ENCODE measurements at regions of chr15 and their contacts with region 1.

Region 1: GRCh38 chr15:38563723-38564519 is 693 bp downstream of the RASGRP1 start:
- DNase-seq: peak; percentile 74 to 81 (median 77)
- ATAC-seq: peak; percentile 92 to 95 (median 92)
- H3K4me3 ChIP-seq: peak overlapping the region; percentile 48 to 60 (median 54)
- H3K27ac ChIP-seq: peak overlapping the region in 2 of 3 donors; percentile 10 to 40
- H3K4me1 ChIP-seq: peaks cover 0 to 13% (median 0%) of the 10 kb centered on the region in 4 donors
- H3K27me3 ChIP-seq: no peaks in the 10 kb centered on the region
- CTCF ChIP-seq: peak; percentile 68 to 92 (median 90)
- POLR2A ChIP-seq: no peak

Region 2: DNA sequence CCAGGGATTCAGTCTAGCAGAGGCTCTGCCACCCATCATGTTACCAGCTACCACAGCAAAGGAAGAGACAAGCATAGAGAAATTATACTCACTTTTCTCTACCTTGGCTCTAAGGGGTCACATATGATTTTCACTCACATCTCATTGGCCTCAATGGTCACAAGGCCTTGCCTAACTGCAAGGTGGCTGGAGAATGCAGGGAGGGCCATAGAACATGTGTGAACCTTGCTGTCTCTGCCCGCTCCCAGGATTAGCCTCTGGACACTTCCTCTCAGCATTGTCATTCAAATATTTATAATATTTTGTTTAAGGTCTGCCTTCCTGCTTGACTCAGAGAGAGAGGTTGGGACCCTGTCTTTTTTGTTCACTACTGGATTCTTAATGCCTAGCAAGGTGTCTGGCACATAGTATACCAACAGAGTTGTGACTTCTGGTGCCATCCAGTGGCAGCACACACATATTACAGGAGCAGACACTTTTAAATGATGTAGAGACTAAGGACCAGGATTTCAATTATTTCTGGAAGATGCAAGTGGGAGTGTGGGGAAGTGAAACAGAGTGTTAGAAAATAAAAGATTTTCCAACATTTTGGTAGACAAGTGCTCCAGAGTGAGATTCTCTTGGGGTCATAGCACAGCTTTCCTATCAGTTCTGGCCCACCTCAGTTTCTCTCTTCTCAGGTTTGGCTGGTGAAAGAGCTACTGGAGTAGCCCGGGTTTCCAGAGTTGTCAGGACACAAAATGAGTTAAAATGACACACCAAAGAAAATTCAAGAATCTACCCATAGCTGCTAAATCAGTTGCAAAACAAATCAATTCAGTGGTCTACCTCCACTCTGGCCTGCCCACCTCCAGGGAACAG is 119.7 kb after region 1 on chr15:
- intact Hi-C with region 1: loop called in 1 of 2 experiments (anchors 10 kb)
- DNase-seq: peak in 2 of 3 donors; percentile 41 to 54
- ATAC-seq: peak; percentile 88 to 94 (median 93)
- H3K4me3 ChIP-seq: no peak overlapping the region
- H3K27ac ChIP-seq: no peak overlapping the region
- H3K4me1 ChIP-seq: no peaks in the 10 kb centered on the region
- H3K27me3 ChIP-seq: no peaks in the 10 kb centered on the region
- CTCF ChIP-seq: peak; percentile 69 to 83 (median 74)
- POLR2A ChIP-seq: no peak

Region 3: GRCh38 chr15:39095218-39095879 is 531.4 kb after region 1 on chr15:
- intact Hi-C with region 1: no loop called
- DNase-seq: no peak
- ATAC-seq: no peak
- H3K4me3 ChIP-seq: no peak overlapping the region
- H3K27ac ChIP-seq: no peak overlapping the region
- H3K4me1 ChIP-seq: no peaks in the 10 kb centered on the region
- H3K27me3 ChIP-seq: no peaks in the 10 kb centered on the region
- CTCF ChIP-seq: no peak
- POLR2A ChIP-seq: no peak

Measured in right lobe of liver (tissue), 6 donors.